ENCODE measurements at regions of chr19 and their contacts with region 1.

Region 1: DNA sequence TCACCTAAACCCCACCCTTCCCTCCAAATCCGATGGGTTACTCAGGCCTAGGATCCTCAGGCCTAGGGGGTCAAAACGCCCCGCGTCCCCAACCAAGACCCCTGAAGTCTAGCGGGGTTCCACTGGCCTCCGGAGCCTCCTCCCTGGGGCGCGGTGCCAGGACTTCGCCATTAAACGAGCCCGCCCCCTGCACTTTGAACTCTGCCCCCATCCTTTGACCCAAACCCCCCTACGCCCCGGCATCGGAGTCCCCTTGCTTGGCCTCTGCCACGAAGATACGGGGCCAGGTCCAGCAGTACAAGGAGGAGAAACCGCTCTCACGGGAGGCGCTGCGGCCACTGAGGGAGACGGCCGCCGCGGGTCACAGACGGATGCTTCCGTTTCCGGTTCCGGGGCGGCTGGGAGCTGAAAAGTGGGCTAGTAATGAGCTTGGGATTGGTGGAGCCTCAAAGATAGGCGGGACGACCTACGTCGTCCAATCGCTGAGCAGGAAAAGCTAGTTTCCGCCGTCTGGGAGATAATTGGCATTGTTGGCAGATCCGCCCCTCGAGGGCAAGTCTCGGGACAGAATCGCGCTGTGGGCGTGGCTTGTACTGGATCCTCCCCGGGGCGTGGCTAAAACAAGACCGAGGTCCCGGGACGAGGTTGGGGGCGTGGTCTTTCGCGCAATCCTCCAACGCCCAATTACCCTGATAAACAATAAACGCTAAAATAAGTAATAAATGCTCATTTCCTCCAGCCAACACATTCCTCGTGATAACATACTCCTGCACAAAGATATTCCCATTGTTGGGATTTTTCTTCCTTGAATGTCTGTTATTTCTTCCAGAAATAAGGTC is 5.7 kb upstream of the ZNF77 start:
- DNase-seq: peak; percentile 99
- H3K4me3 ChIP-seq: peak overlapping the region; percentile 77
- H3K27ac ChIP-seq: peak overlapping the region; percentile 84
- H3K4me1 ChIP-seq: peaks cover 8% of the 10 kb centered on the region
- H3K27me3 ChIP-seq: no peaks in the 10 kb centered on the region
- CTCF ChIP-seq: no peak

Region 2: DNA sequence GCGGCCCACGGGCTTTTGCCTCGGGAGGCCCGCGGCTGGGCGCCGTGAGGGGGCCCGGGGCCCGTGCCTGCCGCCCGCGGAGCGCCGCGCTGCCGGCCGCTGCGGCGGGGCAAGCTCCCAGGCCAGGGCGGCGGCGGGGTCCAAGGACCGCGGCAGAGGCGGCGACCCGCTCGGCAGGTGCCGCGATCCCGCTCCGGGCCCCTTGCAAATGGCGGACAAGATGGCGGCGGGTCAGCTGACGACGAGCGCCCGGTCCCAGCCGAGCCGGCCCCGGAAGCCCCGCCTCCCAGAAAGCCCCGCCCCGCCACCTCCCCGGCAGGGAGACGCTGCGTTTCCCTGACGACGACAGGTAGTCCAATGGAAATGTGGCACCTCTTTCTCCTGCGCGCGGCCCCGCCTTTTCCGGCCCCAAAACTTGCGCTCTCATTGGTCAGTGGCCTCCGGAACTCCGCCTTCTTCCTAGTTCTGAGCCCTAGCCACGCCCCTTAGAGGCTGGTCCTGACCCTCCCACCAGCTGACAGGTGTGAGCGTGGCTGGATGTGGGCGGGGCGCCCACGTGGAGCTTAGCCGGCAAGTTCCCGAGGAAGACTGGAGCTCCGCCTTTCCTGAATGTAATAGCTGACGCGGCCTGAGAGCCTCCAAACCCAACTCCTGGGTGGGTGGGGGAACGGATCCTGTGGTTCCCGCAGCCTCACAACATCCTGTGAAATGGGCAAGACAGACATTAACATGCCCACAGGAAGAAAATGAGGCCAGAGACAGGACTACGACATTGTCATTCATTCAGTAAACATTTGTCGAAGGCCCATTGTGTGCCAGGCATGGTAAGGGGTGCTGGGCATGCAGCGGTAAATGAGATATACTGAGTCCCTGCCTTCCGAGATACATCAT is 798.9 kb before region 1 on chr19 and contains the start of gene AP3D1:
- CTCF ChIA-PET with region 1: interaction called, 12 read pairs
- POLR2A ChIA-PET with region 1: no interaction called
- intact Hi-C with region 1: no loop called
- DNase-seq: peak; percentile 100
- H3K4me3 ChIP-seq: peak within 1 kb of the TSS; percentile 99
- H3K27ac ChIP-seq: peak within 1 kb of the TSS; percentile 91
- H3K4me1 ChIP-seq: peaks cover 17% of the 10 kb centered on the region
- H3K27me3 ChIP-seq: no peaks in the 10 kb centered on the region
- CTCF ChIP-seq: no peak
- total RNA-seq, gene AP3D1: 148 and 154 TPM in 2 replicates

Region 3: GRCh38 chr19:2648528-2648937 is 302.0 kb before region 1 on chr19:
- CTCF ChIA-PET with region 1: interaction called, 9 read pairs
- POLR2A ChIA-PET with region 1: no interaction called
- intact Hi-C with region 1: loop called (anchors 10 kb)
- DNase-seq: peak; percentile 85
- H3K4me3 ChIP-seq: no peak overlapping the region
- H3K27ac ChIP-seq: no peak overlapping the region
- H3K4me1 ChIP-seq: no peaks in the 10 kb centered on the region
- H3K27me3 ChIP-seq: peaks cover 3% of the 10 kb centered on the region
- CTCF ChIP-seq: peak; percentile 89

Region 4: DNA sequence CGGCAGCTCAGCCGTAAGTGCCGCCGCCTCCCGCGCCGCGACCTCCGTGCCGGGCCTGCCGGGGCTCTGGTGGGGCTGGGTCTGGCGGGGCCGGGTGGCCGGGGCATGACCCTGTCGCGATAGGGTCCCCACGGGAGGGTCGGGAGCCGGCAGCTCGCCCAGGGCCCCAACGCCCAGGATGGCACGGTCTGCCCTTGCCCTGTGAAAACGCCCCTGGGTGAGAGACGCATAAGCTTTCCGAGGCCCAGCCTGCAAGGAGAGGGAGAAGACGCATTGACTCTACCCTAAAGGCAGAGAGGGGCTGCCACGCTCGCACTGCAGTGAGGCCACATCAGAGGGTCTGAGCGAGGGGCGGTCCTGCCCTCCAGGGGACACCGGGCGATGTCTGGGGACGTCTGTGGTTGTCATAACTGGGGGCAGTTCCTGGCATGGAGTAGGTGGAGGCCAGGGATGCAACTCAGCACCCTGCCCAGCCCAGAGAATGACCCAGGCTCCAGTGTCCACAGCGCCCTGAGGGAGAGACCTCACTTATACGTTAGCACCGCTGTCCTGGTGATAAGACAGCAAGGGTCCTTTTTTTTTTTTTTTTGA is 130.3 kb before region 1 on chr19:
- CTCF ChIA-PET with region 1: no interaction called
- POLR2A ChIA-PET with region 1: no interaction called
- intact Hi-C with region 1: no loop called
- DNase-seq: no peak
- H3K4me3 ChIP-seq: peak overlapping the region; percentile 91
- H3K27ac ChIP-seq: peak overlapping the region; percentile 81
- H3K4me1 ChIP-seq: no peaks in the 10 kb centered on the region
- H3K27me3 ChIP-seq: no peaks in the 10 kb centered on the region
- CTCF ChIP-seq: no peak

Region 5: GRCh38 chr19:2887391-2887914 is 63.1 kb before region 1 on chr19:
- CTCF ChIA-PET with region 1: interaction called, 11 read pairs
- POLR2A ChIA-PET with region 1: no interaction called
- intact Hi-C with region 1: no loop called
- DNase-seq: peak; percentile 82
- H3K4me3 ChIP-seq: no peak overlapping the region
- H3K27ac ChIP-seq: no peak overlapping the region
- H3K4me1 ChIP-seq: peaks cover 6% of the 10 kb centered on the region
- H3K27me3 ChIP-seq: no peaks in the 10 kb centered on the region
- CTCF ChIP-seq: peak; percentile 79

Region 6: DNA sequence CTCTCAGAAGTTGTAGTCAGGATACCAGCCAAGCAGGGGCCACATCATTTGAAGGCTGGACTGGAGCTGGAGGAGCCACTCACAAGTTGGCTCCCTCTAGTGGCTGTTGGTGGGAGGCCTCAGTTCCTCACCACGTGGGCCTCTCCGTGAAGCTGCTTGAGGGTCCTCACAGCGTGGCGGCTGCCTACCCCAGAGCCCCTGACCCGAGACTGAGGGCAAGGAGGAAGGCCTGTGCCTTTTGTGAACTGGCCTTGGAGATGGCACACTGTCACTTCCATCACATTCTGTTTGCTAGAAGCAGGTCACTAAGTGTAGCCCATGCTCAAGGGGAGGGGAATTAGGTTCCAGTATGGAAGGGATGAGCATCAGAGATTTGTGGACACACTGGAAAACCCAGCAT is 158.3 kb after region 1 on chr19:
- CTCF ChIA-PET with region 1: interaction called, 10 read pairs
- POLR2A ChIA-PET with region 1: no interaction called
- intact Hi-C with region 1: no loop called
- DNase-seq: peak; percentile 77
- H3K4me3 ChIP-seq: no peak overlapping the region
- H3K27ac ChIP-seq: no peak overlapping the region
- H3K4me1 ChIP-seq: no peaks in the 10 kb centered on the region
- H3K27me3 ChIP-seq: no peaks in the 10 kb centered on the region
- CTCF ChIP-seq: peak; percentile 96

Region 7: GRCh38 chr19:3211191-3211590 is 260.7 kb after region 1 on chr19:
- CTCF ChIA-PET with region 1: interaction called, 10 read pairs
- POLR2A ChIA-PET with region 1: interaction called, 7 read pairs
- intact Hi-C with region 1: no loop called
- DNase-seq: no peak
- H3K4me3 ChIP-seq: no peak overlapping the region
- H3K27ac ChIP-seq: no peak overlapping the region
- H3K4me1 ChIP-seq: no peaks in the 10 kb centered on the region
- H3K27me3 ChIP-seq: no peaks in the 10 kb centered on the region
- CTCF ChIP-seq: no peak